Esophagus muscularis mucosa (tissue), 4 donors: ENCODE measurements at regions of chr10 and their contacts with region 1.

Region 1: GRCh38 chr10:23702977-23703414 is 264.1 kb downstream of the OTUD1 start:
- DNase-seq: no peak
- H3K4me3 ChIP-seq: no peak overlapping the region
- H3K27ac ChIP-seq: no peak overlapping the region
- H3K4me1 ChIP-seq: peaks cover 0 to 6% (median 3%) of the 10 kb centered on the region in 4 donors
- H3K27me3 ChIP-seq: peaks cover 0 to 20% (median 0%) of the 10 kb centered on the region in 4 donors
- CTCF ChIP-seq: peak; percentile 40 to 64 (median 56)
- EP300 ChIP-seq: no peak
- POLR2A ChIP-seq: no peak

Region 2: DNA sequence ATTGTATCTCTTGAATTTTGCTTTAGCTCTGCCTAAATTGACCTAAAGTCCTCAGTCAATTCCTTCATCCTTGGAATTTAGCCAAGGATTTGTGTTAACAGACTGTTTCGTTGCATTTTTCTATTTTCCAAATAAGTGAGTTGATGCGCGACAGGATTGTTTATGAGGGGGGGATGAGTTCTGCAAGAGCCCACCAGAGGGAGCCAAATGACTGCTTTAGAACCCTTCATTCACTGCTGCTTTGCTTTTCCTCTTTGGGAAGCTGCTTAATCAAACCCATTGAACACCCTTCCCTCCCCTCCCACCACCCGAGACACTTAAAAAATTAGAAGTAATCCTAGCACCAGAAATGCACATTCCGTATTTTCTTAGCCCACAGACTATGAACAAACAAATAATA is 544.6 kb before region 1 on chr10:
- intact Hi-C with region 1: loop called (anchors 5 kb)
- DNase-seq: peak; percentile 86
- H3K4me3 ChIP-seq: peak overlapping the region in 2 of 4 donors; percentile 14 to 20
- H3K27ac ChIP-seq: no peak overlapping the region
- H3K4me1 ChIP-seq: peaks cover 4 to 7% (median 5%) of the 10 kb centered on the region in 4 donors
- H3K27me3 ChIP-seq: peaks cover 0 to 24% (median 0%) of the 10 kb centered on the region in 4 donors
- CTCF ChIP-seq: peak; percentile 67 to 72 (median 70)
- EP300 ChIP-seq: no peak
- POLR2A ChIP-seq: no peak

Region 3: GRCh38 chr10:23314835-23315239 is 388.2 kb before region 1 on chr10:
- intact Hi-C with region 1: loop called (anchors 2 kb)
- DNase-seq: peak; percentile 64
- H3K4me3 ChIP-seq: no peak overlapping the region
- H3K27ac ChIP-seq: no peak overlapping the region
- H3K4me1 ChIP-seq: peaks cover 0 to 20% (median 2%) of the 10 kb centered on the region in 4 donors
- H3K27me3 ChIP-seq: no peaks in the 10 kb centered on the region
- CTCF ChIP-seq: peak; percentile 68 to 73 (median 71)
- EP300 ChIP-seq: no peak
- POLR2A ChIP-seq: no peak

Region 4: DNA sequence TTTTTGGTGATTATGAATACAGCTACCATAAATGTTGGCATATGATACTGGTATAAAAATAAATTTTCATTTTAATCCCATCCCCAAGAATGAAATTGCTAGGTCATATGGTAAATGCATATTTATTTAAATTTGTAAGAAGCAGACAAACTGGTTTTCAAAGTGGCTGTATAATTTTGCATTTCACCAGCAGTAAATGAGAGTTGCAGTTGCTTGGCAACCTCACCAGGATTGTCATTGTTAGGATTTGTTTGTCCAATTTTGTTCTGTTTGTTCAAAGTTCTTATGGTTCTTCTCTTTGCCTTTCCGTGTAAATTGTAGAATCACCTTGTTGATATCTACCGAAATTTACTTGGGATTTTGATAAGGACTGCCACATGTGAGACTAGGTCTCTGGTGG is 26.7 kb before region 1 on chr10:
- intact Hi-C with region 1: no loop called
- DNase-seq: no peak
- H3K4me3 ChIP-seq: no peak overlapping the region
- H3K27ac ChIP-seq: no peak overlapping the region
- H3K4me1 ChIP-seq: no peaks in the 10 kb centered on the region
- H3K27me3 ChIP-seq: no peaks in the 10 kb centered on the region
- CTCF ChIP-seq: no peak
- EP300 ChIP-seq: no peak
- POLR2A ChIP-seq: no peak